ENCODE measurements at regions of chr6 and their contacts with region 1.

Region 1: DNA sequence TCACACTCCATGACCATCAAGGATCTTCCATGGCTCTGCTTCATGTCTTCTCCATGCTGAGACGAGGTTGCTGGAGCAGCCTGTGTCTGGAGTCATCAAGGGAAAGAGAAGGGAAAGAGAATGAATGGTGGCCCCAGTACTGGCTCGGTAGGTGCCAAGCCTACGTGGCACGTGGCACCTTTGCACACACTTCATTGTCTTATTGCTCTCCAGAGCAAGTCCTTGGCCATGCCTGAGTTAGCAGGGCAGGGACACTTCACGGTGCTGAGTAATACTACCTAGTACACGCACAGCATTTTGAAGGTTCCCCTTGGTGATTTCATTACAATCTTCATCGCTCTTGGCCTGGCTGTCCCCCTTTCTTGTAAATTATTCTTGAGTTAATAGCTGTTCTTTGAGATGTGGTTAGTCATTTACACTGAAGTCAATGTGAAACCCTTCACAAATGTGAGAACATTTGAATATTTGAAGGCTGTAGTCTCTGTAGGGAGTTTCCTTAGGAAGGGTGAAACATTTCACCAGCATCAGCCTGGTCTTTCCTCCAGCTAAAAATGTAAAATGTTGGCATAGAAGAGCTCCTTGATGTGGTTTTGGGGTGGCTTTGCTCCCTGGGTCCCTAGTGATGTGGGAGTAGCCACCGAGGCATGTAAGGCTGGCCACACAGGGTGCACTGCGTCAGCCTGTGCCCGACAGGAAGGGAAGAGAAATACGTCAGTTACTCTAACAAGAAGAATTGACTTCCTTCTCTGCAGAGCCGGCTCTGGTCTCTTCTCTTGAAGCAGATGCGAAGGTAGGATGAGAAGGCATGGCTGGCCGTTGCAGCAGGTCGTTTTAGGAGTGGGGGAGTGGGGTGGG is at the start of gene SYTL3:
- DNase-seq: peak; percentile 95
- H3K4me3 Mint-ChIP-seq: peak within 1 kb of the TSS; percentile 76
- H3K27ac Mint-ChIP-seq: peak within 1 kb of the TSS; percentile 98
- H3K4me1 Mint-ChIP-seq: peaks cover 72% of the 10 kb centered on the region
- H3K27me3 Mint-ChIP-seq: no peaks in the 10 kb centered on the region
- total RNA-seq, gene SYTL3: 115 to 120 TPM

Region 2: GRCh38 chr6:157428427-157429202 is 1220.9 kb before region 1 on chr6:
- CTCF ChIA-PET with region 1: no interaction called
- intact Hi-C with region 1: loop called (anchors 2 kb)
- DNase-seq: peak; percentile 94
- H3K4me3 Mint-ChIP-seq: peak overlapping the region; percentile 43
- H3K27ac Mint-ChIP-seq: peak overlapping the region; percentile 90
- H3K4me1 Mint-ChIP-seq: peaks cover 43% of the 10 kb centered on the region
- H3K27me3 Mint-ChIP-seq: no peaks in the 10 kb centered on the region

Region 3: DNA sequence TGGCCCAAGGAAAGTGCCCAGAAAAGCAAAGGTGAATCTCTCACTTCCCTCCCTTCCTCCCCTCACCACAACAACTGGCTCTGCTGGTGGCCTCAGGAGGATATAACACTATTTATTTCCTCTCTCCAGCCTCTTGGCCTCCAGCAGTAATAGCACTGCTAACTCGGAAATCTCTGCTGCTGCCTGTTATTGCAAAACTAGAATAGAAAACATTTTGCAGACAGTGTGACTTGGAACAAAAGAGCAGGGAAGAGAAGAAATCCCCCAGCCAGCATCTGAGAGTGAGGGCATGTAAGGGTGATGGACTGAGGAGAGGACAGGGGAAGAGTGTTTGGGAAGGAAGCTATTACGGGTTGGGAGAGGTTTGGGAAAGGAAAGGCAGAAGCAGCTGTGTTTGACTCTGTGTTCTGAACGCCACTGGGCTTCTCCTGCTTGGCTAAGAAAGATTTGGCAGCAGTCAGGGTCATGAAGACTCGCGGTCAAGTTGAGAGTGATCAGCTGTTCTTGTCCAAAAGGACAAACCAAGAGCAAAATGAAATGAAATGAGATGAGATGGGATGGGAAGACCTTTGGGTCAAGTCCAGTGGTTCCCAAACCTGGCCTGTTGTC is 907.5 kb before region 1 on chr6:
- CTCF ChIA-PET with region 1: no interaction called
- intact Hi-C with region 1: no loop called
- DNase-seq: no peak
- H3K4me3 Mint-ChIP-seq: no peak overlapping the region
- H3K27ac Mint-ChIP-seq: no peak overlapping the region
- H3K4me1 Mint-ChIP-seq: no peaks in the 10 kb centered on the region
- H3K27me3 Mint-ChIP-seq: no peaks in the 10 kb centered on the region

Region 4: DNA sequence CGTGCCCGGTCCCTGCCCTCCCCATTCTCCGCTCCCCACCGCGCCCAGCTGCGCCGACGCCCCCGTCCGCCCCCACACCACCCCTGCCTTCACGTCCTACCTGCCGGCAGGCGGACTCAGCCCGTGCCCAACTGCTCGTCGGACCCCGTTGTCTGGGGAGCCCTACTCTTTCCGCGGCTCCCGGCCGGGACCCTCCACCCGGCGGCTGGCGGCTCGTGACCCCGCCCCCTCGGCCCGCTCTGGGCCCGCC is 481.6 kb before region 1 on chr6 and contains the start of gene SERAC1:
- CTCF ChIA-PET with region 1: no interaction called
- intact Hi-C with region 1: loop called (anchors 2 kb)
- DNase-seq: no peak
- H3K4me3 Mint-ChIP-seq: peak within 1 kb of the TSS; percentile 91
- H3K27ac Mint-ChIP-seq: peak within 1 kb of the TSS; percentile 94
- H3K4me1 Mint-ChIP-seq: peaks cover 26% of the 10 kb centered on the region
- H3K27me3 Mint-ChIP-seq: no peaks in the 10 kb centered on the region
- total RNA-seq, gene SERAC1: 3.1 to 4.8 TPM

Region 5: DNA sequence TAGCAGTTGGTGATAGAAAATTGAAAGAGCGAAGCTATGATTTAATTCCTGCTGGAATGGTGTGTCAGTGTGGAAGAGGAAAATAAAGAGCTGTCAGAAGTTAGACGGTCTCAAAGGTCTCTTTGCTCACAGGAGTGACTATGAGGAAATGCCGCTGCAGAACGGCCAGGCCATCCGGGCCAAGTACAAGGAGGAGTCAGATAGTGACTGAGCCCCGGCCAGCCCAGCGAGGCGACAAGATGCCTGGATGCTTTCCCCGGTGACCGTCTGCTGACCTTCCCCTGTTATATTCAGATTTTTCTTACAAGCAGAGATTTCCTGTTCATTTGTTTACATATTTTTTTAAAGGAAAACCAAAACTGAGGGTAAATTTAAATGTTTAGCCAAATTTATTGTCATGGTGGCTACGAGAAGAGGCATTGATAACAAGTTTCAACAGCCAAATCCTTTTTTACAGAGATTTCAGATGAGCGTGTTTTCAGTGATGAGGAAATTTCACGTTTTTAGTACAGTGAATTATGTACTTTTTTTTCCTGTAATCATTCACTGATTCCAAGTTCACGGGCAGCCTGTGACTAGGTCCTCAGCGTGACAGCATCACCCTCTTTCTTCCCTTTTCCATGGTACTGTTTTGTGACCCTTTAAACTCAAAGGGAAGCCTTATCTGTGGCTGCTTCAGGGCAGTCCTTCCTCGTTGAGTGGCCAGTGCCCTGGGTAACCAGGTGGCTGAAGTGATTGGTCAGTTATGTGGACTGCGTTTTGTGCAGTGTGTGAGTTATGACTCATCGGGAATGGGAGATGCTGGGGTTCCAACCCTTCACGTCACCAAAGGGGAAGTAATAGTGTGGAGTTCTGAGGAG is 17.6 kb before region 1 on chr6:
- CTCF ChIA-PET with region 1: no interaction called
- intact Hi-C with region 1: loop called (anchors 2 kb)
- DNase-seq: no peak
- H3K4me3 Mint-ChIP-seq: no peak overlapping the region
- H3K27ac Mint-ChIP-seq: peak overlapping the region; percentile 83
- H3K4me1 Mint-ChIP-seq: peaks cover 46% of the 10 kb centered on the region
- H3K27me3 Mint-ChIP-seq: no peaks in the 10 kb centered on the region

Region 6: GRCh38 chr6:158819213-158819909 is 169.8 kb after region 1 on chr6 and contains the start of gene EZR:
- CTCF ChIA-PET with region 1: no interaction called
- intact Hi-C with region 1: loop called (anchors 1 kb)
- DNase-seq: peak; percentile 87
- H3K4me3 Mint-ChIP-seq: peak within 1 kb of the TSS; percentile 97
- H3K27ac Mint-ChIP-seq: peak within 1 kb of the TSS; percentile 98
- H3K4me1 Mint-ChIP-seq: peaks cover 47% of the 10 kb centered on the region
- H3K27me3 Mint-ChIP-seq: no peaks in the 10 kb centered on the region
- total RNA-seq, gene EZR: 229 to 230 TPM

Region 7: DNA sequence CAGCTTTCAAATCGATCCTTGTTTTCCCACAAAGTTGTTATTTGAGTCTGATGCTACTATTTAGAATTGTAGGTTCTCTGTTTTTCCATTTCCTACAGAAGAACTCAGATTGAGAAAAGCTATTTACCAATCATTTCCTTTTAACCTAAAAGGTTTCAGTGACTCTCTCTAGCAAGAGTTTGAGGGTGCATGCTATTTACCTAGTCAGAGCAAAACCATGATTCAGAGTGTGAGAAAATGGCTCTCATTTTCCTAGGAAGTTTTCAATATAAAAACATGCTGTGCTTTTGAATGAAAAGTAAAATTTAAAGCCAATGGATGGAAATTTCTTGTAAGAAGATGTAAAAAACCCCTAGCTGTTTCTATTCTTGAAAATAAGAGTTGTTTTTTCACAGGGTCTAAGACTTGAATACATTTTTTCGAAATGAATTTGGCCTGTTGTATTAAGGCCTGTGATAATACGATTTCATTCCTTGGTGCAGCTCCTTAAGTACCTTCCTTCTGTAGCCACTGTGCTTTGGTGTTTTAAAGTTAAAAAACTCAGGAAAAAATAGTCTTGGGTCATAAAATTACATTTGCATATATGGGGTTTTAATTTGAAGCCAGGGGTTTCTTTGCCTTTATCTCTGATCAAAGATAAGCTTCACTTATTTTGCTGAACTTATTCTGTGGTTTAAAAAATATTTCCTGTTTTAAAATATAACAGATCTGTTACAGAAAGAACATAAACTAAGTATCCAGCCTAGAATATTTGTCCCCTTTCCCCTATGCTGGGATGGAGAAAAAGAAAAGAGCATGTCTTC is 368.4 kb after region 1 on chr6:
- CTCF ChIA-PET with region 1: no interaction called
- intact Hi-C with region 1: loop called (anchors 1 kb)
- DNase-seq: no peak
- H3K4me3 Mint-ChIP-seq: no peak overlapping the region
- H3K27ac Mint-ChIP-seq: peak overlapping the region; percentile 68
- H3K4me1 Mint-ChIP-seq: peaks cover 47% of the 10 kb centered on the region
- H3K27me3 Mint-ChIP-seq: no peaks in the 10 kb centered on the region

Region 8: DNA sequence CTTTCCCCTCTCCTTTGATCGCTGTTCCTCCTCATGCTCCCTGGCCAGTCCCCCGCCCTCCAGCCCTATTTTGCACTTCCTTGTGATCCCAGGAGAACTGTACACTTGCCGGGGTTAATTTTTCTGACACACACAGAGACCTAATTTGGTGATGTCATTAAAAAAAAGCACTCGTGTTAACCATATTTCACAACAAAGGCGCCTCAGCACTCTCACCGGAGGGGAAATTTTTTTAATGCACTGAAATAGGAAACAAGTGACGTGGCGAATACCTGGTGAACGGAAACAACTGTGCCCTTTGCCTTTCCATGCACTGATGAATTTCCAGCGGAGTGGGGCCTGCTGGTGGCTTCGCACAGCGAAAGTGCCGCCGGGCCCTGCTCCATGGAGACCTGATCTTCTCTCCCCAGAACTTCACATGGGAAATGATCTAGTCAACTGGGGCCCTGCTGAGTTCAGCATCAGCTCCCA is 449.2 kb after region 1 on chr6:
- CTCF ChIA-PET with region 1: no interaction called
- intact Hi-C with region 1: loop called (anchors 2 kb)
- DNase-seq: peak; percentile 87
- H3K4me3 Mint-ChIP-seq: peak overlapping the region; percentile 63
- H3K27ac Mint-ChIP-seq: peak overlapping the region; percentile 95
- H3K4me1 Mint-ChIP-seq: peaks cover 94% of the 10 kb centered on the region
- H3K27me3 Mint-ChIP-seq: no peaks in the 10 kb centered on the region